Right ventricle myocardium superior (tissue), 1 donor: ENCODE measurements at regions of chr9 and their contacts with region 1.

Region 1: GRCh38 chr9:20292002-20292401 is 330.3 kb downstream of the MLLT3 start:
- DNase-seq: no peak
- ATAC-seq: no peak

Region 2: GRCh38 chr9:20356403-20357035 is 64.5 kb after region 1 on chr9:
- intact Hi-C with region 1: loop called (anchors 10 kb)
- DNase-seq: peak; percentile 66
- ATAC-seq: peak; percentile 89